B cell (primary cell): ENCODE measurements at regions of chr1 and their contacts with region 1.

Region 1: GRCh38 chr1:244864253-244865027 is at the start of gene HNRNPU:
- DNase-seq: peak; percentile 98
- ATAC-seq: peak; percentile 71
- H3K4me3 ChIP-seq: peak within 1 kb of the TSS; percentile 82 to 99 (median 98)
- H3K4me3 Mint-ChIP-seq: peak within 1 kb of the TSS; percentile 87
- H3K27ac ChIP-seq: peak within 1 kb of the TSS; percentile 98 to 99
- H3K27ac Mint-ChIP-seq: peak within 1 kb of the TSS; percentile 98
- H3K4me1 ChIP-seq: peaks cover 29 to 34% of the 10 kb centered on the region in 2 donors
- H3K4me1 Mint-ChIP-seq: peaks cover 36% of the 10 kb centered on the region
- H3K27me3 ChIP-seq: no peaks in the 10 kb centered on the region
- H3K27me3 Mint-ChIP-seq: no peaks in the 10 kb centered on the region
- CTCF ChIP-seq: peak; percentile 52
- total RNA-seq, gene HNRNPU: 406 and 415 TPM in 2 replicates

Region 2: GRCh38 chr1:244585867-244586266 is 278.6 kb before region 1 on chr1:
- CTCF ChIA-PET with region 1: no interaction called
- POLR2A ChIA-PET with region 1: no interaction called
- intact Hi-C with region 1: no loop called
- DNase-seq: no peak
- ATAC-seq: no peak
- H3K4me3 ChIP-seq: no peak overlapping the region
- H3K4me3 Mint-ChIP-seq: no peak overlapping the region
- H3K27ac ChIP-seq: no peak overlapping the region
- H3K27ac Mint-ChIP-seq: no peak overlapping the region
- H3K4me1 ChIP-seq: no peaks in the 10 kb centered on the region
- H3K4me1 Mint-ChIP-seq: peaks cover 2% of the 10 kb centered on the region
- H3K27me3 ChIP-seq: no peaks in the 10 kb centered on the region
- H3K27me3 Mint-ChIP-seq: no peaks in the 10 kb centered on the region
- CTCF ChIP-seq: no peak

Region 3: GRCh38 chr1:244740079-244740478 is 124.4 kb before region 1 on chr1:
- CTCF ChIA-PET with region 1: no interaction called
- POLR2A ChIA-PET with region 1: interaction called, 12 read pairs
- intact Hi-C with region 1: no loop called
- DNase-seq: no peak
- ATAC-seq: no peak
- H3K4me3 ChIP-seq: no peak overlapping the region
- H3K4me3 Mint-ChIP-seq: no peak overlapping the region
- H3K27ac ChIP-seq: no peak overlapping the region
- H3K27ac Mint-ChIP-seq: no peak overlapping the region
- H3K4me1 ChIP-seq: peaks cover 5 to 7% of the 10 kb centered on the region in 2 donors
- H3K4me1 Mint-ChIP-seq: peaks cover 12% of the 10 kb centered on the region
- H3K27me3 ChIP-seq: no peaks in the 10 kb centered on the region
- H3K27me3 Mint-ChIP-seq: no peaks in the 10 kb centered on the region
- CTCF ChIP-seq: no peak

Region 4: GRCh38 chr1:244835276-244836134 is 28.9 kb before region 1 on chr1 and contains the start of gene COX20:
- CTCF ChIA-PET with region 1: interaction called, 70 read pairs
- POLR2A ChIA-PET with region 1: interaction called, 135 read pairs
- intact Hi-C with region 1: loop called (anchors 1 kb)
- DNase-seq: peak; percentile 97
- ATAC-seq: peak; percentile 69
- H3K4me3 ChIP-seq: peak within 1 kb of the TSS; percentile 89 to 98 (median 94)
- H3K4me3 Mint-ChIP-seq: peak within 1 kb of the TSS; percentile 100
- H3K27ac ChIP-seq: peak within 1 kb of the TSS; percentile 97
- H3K27ac Mint-ChIP-seq: peak within 1 kb of the TSS; percentile 100
- H3K4me1 ChIP-seq: peaks cover 21 to 27% of the 10 kb centered on the region in 2 donors
- H3K4me1 Mint-ChIP-seq: peaks cover 59% of the 10 kb centered on the region
- H3K27me3 ChIP-seq: no peaks in the 10 kb centered on the region
- H3K27me3 Mint-ChIP-seq: no peaks in the 10 kb centered on the region
- CTCF ChIP-seq: peak; percentile 13
- total RNA-seq, gene COX20: 35.7 and 37.7 TPM in 2 replicates

Region 5: DNA sequence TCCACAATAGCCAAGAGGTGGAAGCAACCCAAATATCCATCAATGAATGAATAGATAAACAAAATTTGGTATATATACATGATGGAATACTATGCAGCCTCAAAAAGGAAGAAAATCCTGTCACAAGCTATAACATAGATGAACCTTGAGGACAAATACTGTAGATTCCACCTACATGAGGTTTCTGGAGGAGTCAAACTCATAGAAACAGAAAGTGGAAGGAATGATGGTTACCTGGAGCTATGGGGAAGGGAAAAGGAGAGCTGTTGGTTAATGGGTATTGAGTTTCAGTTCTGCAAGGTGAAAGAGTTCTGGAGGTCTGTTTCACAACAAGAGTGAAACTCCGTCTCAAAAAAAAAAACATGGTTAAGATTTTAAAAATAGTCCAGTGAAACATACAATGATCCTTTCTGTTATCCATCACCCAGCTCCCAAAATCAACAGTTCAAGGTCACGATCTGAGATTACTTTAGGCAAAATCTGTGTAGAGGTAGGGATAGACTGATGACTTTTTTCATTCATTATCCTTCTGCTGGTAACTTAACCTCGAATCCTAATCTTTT is 80.8 kb after region 1 on chr1:
- CTCF ChIA-PET with region 1: interaction called, 14 read pairs
- POLR2A ChIA-PET with region 1: interaction called, 9 read pairs
- intact Hi-C with region 1: loop called (anchors 1 kb)
- DNase-seq: peak; percentile 63
- ATAC-seq: peak; percentile 19
- H3K4me3 ChIP-seq: peak overlapping the region in 2 of 5 experiments; percentile 13 to 35
- H3K4me3 Mint-ChIP-seq: peak overlapping the region; percentile 71
- H3K27ac ChIP-seq: peak overlapping the region; percentile 61 to 63
- H3K27ac Mint-ChIP-seq: peak overlapping the region; percentile 87
- H3K4me1 ChIP-seq: peaks cover 18 to 31% of the 10 kb centered on the region in 2 donors
- H3K4me1 Mint-ChIP-seq: peaks cover 25% of the 10 kb centered on the region
- H3K27me3 ChIP-seq: no peaks in the 10 kb centered on the region
- H3K27me3 Mint-ChIP-seq: no peaks in the 10 kb centered on the region
- CTCF ChIP-seq: no peak

Region 6: DNA sequence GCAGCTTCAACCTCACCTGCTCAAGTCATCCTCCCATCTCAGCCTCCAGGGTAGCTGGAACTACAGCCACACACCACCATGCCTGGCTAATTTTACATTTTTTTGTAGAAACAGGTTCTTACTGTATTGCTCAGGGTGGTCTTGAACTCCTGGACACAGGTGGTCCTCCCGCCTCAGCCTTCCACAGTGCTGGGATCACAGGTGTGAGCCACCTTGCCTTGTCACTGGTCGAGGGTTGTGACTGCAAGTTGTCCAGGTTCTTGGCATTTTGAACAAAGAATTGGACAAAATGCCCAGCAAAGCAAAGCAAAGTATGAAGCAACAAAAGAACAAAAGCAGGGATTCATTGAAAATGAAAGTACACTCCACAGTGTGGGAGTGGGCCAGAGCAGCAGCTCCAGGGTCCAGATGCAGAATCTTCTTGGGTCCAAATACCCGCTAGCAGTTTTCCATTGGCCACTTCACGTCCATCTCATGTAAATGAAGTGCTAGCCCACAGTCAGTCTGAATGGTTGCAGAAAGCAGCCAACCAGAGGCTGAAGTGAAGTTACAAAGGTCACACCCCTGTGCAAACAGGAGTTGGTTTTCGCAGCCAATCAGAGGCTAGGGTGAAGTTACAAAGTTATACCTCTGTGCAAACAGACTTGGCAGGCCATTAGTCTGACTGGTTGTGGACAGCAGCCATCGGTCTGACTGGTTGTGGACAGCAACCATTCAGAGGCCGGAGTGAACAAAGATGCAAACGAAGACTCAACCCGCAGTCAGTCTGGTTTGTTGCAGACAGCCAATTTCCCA is 180.8 kb after region 1 on chr1:
- CTCF ChIA-PET with region 1: interaction called, 66 read pairs
- POLR2A ChIA-PET with region 1: interaction called, 11 read pairs
- intact Hi-C with region 1: loop called (anchors 1 kb)
- DNase-seq: no peak
- ATAC-seq: no peak
- H3K4me3 ChIP-seq: no peak overlapping the region
- H3K4me3 Mint-ChIP-seq: no peak overlapping the region
- H3K27ac ChIP-seq: no peak overlapping the region
- H3K27ac Mint-ChIP-seq: no peak overlapping the region
- H3K4me1 ChIP-seq: no peaks in the 10 kb centered on the region
- H3K4me1 Mint-ChIP-seq: no peaks in the 10 kb centered on the region
- H3K27me3 ChIP-seq: no peaks in the 10 kb centered on the region
- H3K27me3 Mint-ChIP-seq: no peaks in the 10 kb centered on the region
- CTCF ChIP-seq: no peak